Ascending aorta (tissue), 2 donors: ENCODE measurements at regions of chr19 and their contacts with region 1.

Region 1: GRCh38 chr19:51904331-51905165 is at the start of gene ZNF649:
- DNase-seq: peak; percentile 17 to 88
- H3K4me3 ChIP-seq: peak within 1 kb of the TSS; percentile 76 to 79
- H3K27ac ChIP-seq: peak within 1 kb of the TSS; percentile 70 to 76
- H3K4me1 ChIP-seq: peaks cover 0 to 4% of the 10 kb centered on the region in 2 donors
- H3K27me3 ChIP-seq: no peaks in the 10 kb centered on the region
- CTCF ChIP-seq: no peak
- total RNA-seq, gene ZNF649: 4.7 TPM

Region 2: DNA sequence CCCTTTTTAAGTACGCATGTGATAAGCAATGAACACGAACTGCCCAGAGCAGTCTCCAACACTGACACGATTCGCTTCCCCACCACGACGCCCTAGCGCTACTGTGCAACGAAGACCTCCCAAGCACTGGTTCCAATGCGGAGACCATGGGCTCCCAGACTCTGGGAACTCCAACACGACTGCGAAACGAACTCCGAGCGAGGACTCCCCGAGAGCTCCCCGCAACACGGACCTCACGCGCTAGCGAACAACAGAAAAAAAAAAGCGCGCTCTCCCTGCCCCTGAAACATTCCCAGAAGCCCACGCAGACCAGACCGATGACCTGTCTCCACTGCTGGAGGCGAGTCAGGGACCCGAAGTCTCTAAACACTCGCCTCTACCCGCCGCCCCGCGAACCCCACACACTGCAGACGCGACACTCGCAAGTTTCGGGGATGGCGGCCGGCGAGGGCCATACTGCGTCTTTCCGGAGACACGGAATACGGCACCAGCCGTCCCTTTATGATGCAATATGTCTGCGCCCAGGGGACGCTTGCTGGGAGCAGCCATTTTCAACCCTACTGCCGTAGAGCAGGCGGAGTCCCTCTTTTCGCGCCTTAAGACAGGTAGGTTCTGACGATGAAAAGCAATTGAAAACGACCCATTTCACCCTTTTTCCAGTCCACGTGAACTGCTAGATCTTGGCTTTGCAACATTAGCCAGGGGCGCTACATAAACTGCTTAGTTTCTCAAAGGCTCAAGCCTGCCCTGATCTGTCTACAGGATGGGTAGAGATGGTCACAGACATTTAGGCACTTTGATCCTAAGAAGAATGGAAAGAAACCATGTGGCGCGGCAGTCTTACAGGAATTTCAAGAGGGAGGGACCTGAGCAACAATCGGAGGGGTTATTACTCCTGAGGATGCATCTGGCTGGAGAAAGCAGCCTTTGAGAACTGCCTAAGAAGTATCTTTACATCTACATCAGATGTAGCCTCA is 16.7 kb before region 1 on chr19 and contains the start of gene ZNF577:
- intact Hi-C with region 1: loop called (anchors 2 kb)
- DNase-seq: peak; percentile 53 to 93
- H3K4me3 ChIP-seq: peak within 1 kb of the TSS; percentile 59 to 85
- H3K27ac ChIP-seq: peak within 1 kb of the TSS; percentile 60 to 74
- H3K4me1 ChIP-seq: no peaks in the 10 kb centered on the region
- H3K27me3 ChIP-seq: no peaks in the 10 kb centered on the region
- CTCF ChIP-seq: no peak
- total RNA-seq, gene ZNF577: 3.8 TPM

Region 3: GRCh38 chr19:51986309-51987291 is 82.1 kb after region 1 on chr19 and contains the start of gene ZNF350:
- intact Hi-C with region 1: no loop called
- DNase-seq: peak; percentile 78 to 97
- H3K4me3 ChIP-seq: peak within 1 kb of the TSS; percentile 57 to 78
- H3K27ac ChIP-seq: peak within 1 kb of the TSS; percentile 57 to 71
- H3K4me1 ChIP-seq: peaks cover 0 to 5% of the 10 kb centered on the region in 2 donors
- H3K27me3 ChIP-seq: no peaks in the 10 kb centered on the region
- CTCF ChIP-seq: no peak
- total RNA-seq, gene ZNF350: 11.4 TPM